CD8-positive, alpha-beta T cell (primary cell): ENCODE measurements at regions of chr18 and their contacts with region 1.

Region 1: DNA sequence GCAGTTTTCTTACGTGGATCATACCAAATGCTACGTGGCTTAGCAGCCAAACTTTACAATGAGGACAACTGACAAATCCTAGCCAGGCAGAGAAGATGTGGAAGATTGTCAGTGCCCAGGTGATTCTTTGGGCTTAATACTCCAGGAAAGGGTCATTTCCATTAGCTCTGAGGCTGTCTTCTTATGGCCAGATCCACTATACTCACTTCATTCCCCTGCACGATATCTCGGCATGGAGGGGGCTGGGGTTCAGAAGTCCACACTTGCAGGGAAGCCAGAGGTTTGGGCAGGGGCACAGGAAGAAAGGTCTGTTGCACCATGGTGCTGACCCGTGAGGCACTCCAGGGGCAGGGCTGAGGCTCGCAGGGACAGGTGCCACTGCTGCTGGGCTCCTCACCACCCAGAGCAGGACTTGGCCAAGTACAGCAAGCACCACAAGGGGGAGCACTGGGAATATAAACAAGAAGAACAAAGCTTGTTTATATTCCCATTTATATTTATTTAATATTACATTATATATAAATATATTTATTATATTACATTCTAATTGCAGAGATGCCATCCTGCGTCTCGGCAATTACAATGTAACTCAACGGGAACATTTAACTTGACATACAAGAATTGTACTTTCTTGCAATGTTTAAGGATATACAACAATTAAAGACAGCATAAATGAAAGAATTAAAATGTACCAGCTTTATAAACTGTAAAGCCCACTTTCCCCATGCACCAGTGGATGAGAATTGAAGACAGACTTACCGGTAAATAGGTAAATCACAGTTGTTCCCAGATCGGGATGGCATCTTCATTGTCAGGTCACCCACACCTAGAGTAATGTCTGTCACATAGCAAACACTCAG is 27.2 kb downstream of the CLUL1 start:
- DNase-seq: peak; percentile 21 to 71 (median 61)
- ATAC-seq: peak; percentile 68
- H3K4me3 ChIP-seq: no peak overlapping the region
- H3K4me3 Mint-ChIP-seq: no peak overlapping the region
- H3K27ac ChIP-seq: no peak overlapping the region
- H3K27ac Mint-ChIP-seq: no peak overlapping the region
- H3K4me1 ChIP-seq: no peaks in the 10 kb centered on the region
- H3K4me1 Mint-ChIP-seq: no peaks in the 10 kb centered on the region
- H3K27me3 ChIP-seq: no peaks in the 10 kb centered on the region
- H3K27me3 Mint-ChIP-seq: peaks cover 6% of the 10 kb centered on the region
- CTCF ChIP-seq: peak; percentile 60

Region 2: GRCh38 chr18:692824-693223 is 68.8 kb after region 1 on chr18:
- CTCF ChIA-PET with region 1: no interaction called
- POLR2A ChIA-PET with region 1: no interaction called
- intact Hi-C with region 1: no loop called
- DNase-seq: peak in 1 of 9 experiments; percentile 35
- ATAC-seq: no peak
- H3K4me3 ChIP-seq: no peak overlapping the region
- H3K4me3 Mint-ChIP-seq: no peak overlapping the region
- H3K27ac ChIP-seq: no peak overlapping the region
- H3K27ac Mint-ChIP-seq: peak overlapping the region; percentile 64
- H3K4me1 ChIP-seq: no peaks in the 10 kb centered on the region
- H3K4me1 Mint-ChIP-seq: no peaks in the 10 kb centered on the region
- H3K27me3 ChIP-seq: no peaks in the 10 kb centered on the region
- H3K27me3 Mint-ChIP-seq: no peaks in the 10 kb centered on the region
- CTCF ChIP-seq: no peak

Region 3: DNA sequence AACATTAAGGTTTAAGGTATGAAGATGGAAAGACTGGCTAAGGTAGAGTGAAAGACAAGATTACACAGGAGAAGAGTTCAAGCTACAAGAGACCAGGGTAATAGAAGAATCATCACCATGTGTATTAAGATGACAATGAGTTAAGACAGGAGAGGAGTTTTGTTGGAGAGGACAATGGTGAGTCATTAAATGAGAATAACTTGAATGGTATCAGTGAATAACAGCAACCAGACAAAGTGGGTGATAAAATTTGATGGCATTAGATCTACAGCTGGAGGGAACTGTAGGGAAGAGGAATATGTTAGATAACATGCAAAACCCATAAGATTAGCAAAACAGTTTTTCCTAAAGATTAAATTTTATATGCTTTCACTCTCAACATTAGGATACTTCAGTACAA is 107.2 kb after region 1 on chr18:
- CTCF ChIA-PET with region 1: no interaction called
- POLR2A ChIA-PET with region 1: no interaction called
- intact Hi-C with region 1: loop called in 1 of 2 experiments (anchors 2 kb)
- DNase-seq: no peak
- ATAC-seq: no peak
- H3K4me3 ChIP-seq: no peak overlapping the region
- H3K4me3 Mint-ChIP-seq: no peak overlapping the region
- H3K27ac ChIP-seq: no peak overlapping the region
- H3K27ac Mint-ChIP-seq: no peak overlapping the region
- H3K4me1 ChIP-seq: no peaks in the 10 kb centered on the region
- H3K4me1 Mint-ChIP-seq: no peaks in the 10 kb centered on the region
- H3K27me3 ChIP-seq: no peaks in the 10 kb centered on the region
- H3K27me3 Mint-ChIP-seq: no peaks in the 10 kb centered on the region
- CTCF ChIP-seq: no peak

Region 4: GRCh38 chr18:741931-742512 is 118.0 kb after region 1 on chr18:
- CTCF ChIA-PET with region 1: no interaction called
- POLR2A ChIA-PET with region 1: no interaction called
- intact Hi-C with region 1: loop called in 1 of 2 experiments (anchors 5 kb)
- DNase-seq: peak in 2 of 9 experiments; percentile 59 to 72
- ATAC-seq: peak; percentile 76
- H3K4me3 ChIP-seq: no peak overlapping the region
- H3K4me3 Mint-ChIP-seq: no peak overlapping the region
- H3K27ac ChIP-seq: no peak overlapping the region
- H3K27ac Mint-ChIP-seq: no peak overlapping the region
- H3K4me1 ChIP-seq: no peaks in the 10 kb centered on the region
- H3K4me1 Mint-ChIP-seq: peaks cover 2% of the 10 kb centered on the region
- H3K27me3 ChIP-seq: no peaks in the 10 kb centered on the region
- H3K27me3 Mint-ChIP-seq: no peaks in the 10 kb centered on the region
- CTCF ChIP-seq: peak; percentile 89

Region 5: DNA sequence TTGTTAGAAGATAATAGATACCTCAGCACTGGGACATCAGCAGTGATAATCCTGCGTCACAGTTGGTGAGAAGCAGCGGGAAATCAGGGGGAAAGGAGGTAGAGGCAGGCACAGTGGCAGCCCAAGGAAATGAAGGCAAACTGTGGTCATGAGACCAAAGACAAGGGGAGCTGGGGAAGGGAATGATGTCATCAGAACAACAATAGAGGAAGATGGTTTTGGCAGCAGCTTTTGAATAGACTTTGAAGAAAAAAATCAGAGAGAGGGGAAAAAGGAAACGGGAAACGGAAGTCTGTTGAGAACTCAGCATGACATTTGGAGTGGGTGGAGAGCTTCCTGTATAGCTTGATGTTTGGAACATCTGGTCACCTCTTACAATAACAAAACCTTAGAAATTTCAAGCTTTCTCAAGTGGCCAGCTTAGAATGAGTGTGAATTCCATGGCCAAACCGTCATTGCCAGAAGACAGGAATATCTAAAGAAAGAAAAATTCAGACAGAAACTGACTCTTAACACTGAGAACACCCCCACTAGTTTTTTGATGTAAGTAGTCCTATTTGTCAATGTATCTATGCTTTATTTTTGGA is 206.4 kb after region 1 on chr18:
- CTCF ChIA-PET with region 1: interaction called, 37 read pairs
- POLR2A ChIA-PET with region 1: interaction called, 4 read pairs
- intact Hi-C with region 1: no loop called
- DNase-seq: peak in 6 of 9 experiments; percentile 19 to 85 (median 56)
- ATAC-seq: peak; percentile 81
- H3K4me3 ChIP-seq: peak overlapping the region in 1 of 2 experiments; percentile 22
- H3K4me3 Mint-ChIP-seq: peak overlapping the region; percentile 59
- H3K27ac ChIP-seq: peak overlapping the region; percentile 26 to 83
- H3K27ac Mint-ChIP-seq: peak overlapping the region; percentile 68
- H3K4me1 ChIP-seq: peaks cover 23% of the 10 kb centered on the region
- H3K4me1 Mint-ChIP-seq: peaks cover 26% of the 10 kb centered on the region
- H3K27me3 ChIP-seq: no peaks in the 10 kb centered on the region
- H3K27me3 Mint-ChIP-seq: no peaks in the 10 kb centered on the region
- CTCF ChIP-seq: no peak

Region 6: GRCh38 chr18:839224-840022 is 215.4 kb after region 1 on chr18:
- CTCF ChIA-PET with region 1: interaction called, 37 read pairs
- POLR2A ChIA-PET with region 1: no interaction called
- intact Hi-C with region 1: loop called (anchors 1 kb)
- DNase-seq: peak; percentile 77 to 95 (median 85)
- ATAC-seq: peak; percentile 97
- H3K4me3 ChIP-seq: no peak overlapping the region
- H3K4me3 Mint-ChIP-seq: no peak overlapping the region
- H3K27ac ChIP-seq: no peak overlapping the region
- H3K27ac Mint-ChIP-seq: no peak overlapping the region
- H3K4me1 ChIP-seq: peaks cover 4% of the 10 kb centered on the region
- H3K4me1 Mint-ChIP-seq: peaks cover 4% of the 10 kb centered on the region
- H3K27me3 ChIP-seq: no peaks in the 10 kb centered on the region
- H3K27me3 Mint-ChIP-seq: no peaks in the 10 kb centered on the region
- CTCF ChIP-seq: peak; percentile 95